CD8-positive, alpha-beta T cell (primary cell): ENCODE measurements at regions of chr11 and their contacts with region 1.

Region 1: DNA sequence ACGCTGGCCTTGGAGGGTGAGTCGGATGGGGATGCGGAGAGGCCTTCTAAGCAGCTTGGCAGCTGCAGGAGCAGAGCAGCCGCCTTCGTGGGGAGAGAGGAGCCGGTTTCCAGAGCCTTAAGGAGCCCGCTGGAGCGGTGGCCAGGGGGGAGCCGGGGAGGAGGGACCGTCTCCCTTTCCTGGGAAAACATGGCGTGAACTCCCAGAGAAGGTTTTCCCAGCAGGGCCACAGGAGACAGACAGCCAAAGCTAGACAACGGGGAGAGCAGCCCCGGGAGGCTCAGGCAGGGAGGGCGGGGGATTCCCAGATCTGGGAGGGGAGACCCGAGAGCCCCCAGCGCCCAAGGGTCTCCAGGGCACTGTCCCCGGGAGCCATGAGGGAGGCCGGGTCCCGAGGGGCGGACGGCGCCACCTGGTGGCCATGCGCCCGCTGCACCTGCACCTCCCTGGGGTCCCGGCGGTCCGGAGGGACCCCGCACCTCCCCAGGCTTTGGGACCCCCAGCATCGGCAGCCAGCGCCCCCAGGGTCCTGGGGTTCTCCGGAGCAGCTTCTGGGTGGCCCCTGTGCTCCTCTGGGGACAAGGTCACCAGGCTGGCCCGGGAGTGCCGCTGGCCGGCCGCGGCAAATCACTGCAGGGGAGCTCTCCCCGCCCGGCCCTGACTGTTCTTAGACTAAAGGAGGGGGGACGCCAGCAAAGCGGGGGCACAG is 2.4 kb upstream of the SYT8 start:
- DNase-seq: peak; percentile 43 to 87 (median 70)
- ATAC-seq: peak; percentile 77
- H3K4me3 ChIP-seq: no peak overlapping the region
- H3K4me3 Mint-ChIP-seq: no peak overlapping the region
- H3K27ac ChIP-seq: no peak overlapping the region
- H3K27ac Mint-ChIP-seq: no peak overlapping the region
- H3K4me1 ChIP-seq: peaks cover 7% of the 10 kb centered on the region
- H3K4me1 Mint-ChIP-seq: no peaks in the 10 kb centered on the region
- H3K27me3 ChIP-seq: peaks cover 0 to 6% of the 10 kb centered on the region in 2 experiments
- H3K27me3 Mint-ChIP-seq: peaks cover 2% of the 10 kb centered on the region
- CTCF ChIP-seq: peak; percentile 95

Region 2: DNA sequence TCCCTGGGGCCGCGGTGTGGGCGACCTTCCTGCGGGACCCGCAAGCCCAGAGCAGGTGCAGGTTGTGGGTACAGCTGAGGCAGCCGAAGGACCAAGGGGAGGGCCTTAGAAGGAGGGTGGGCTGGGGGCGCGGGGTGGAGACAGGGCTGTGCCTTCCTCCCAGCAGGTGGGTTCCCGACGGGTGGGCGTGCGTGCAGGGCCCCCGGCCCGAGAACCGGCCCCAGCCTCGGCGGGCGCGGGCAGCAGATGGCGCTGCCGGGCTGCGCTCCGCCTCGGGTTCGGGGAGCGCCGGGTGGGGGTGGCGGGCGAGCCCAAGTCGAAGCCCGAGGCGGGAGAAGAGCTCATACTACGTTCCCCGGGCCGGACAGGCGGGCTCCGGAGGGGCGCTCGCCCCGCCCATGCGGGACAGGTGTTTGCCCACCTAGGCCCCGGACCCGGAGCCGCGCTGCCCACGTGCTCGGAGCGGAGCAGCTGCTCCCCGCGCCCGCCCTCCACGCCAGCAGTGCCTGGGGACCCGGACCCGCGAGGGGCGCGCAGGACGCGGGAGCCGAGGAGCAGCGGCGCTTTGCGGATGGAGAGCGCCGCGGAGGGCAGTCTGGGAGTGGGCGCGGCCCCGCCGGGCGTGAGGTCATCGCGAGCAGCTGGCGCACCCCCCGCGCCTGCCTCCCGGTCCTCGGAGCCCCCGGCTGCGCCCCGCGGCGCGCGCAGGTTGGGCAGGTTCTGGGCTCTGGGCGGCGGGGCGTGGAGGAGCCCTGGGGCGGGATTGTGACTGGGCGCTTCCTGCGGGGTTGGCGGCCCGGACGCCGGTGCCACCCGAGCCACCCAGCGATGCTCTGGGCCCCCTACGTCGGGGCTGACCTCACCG is 285.6 kb before region 1 on chr11:
- CTCF ChIA-PET with region 1: interaction called, 5 read pairs
- POLR2A ChIA-PET with region 1: no interaction called
- intact Hi-C with region 1: loop called in 1 of 2 experiments (anchors 1 kb)
- DNase-seq: peak in 8 of 9 experiments; percentile 22 to 78 (median 60)
- ATAC-seq: peak; percentile 82
- H3K4me3 ChIP-seq: peak overlapping the region in 1 of 2 experiments; percentile 43
- H3K4me3 Mint-ChIP-seq: no peak overlapping the region
- H3K27ac ChIP-seq: no peak overlapping the region
- H3K27ac Mint-ChIP-seq: no peak overlapping the region
- H3K4me1 ChIP-seq: peaks cover 13% of the 10 kb centered on the region
- H3K4me1 Mint-ChIP-seq: peaks cover 4% of the 10 kb centered on the region
- H3K27me3 ChIP-seq: peaks cover 9 to 18% of the 10 kb centered on the region in 2 experiments
- H3K27me3 Mint-ChIP-seq: peaks cover 25% of the 10 kb centered on the region
- CTCF ChIP-seq: peak; percentile 82

Region 3: DNA sequence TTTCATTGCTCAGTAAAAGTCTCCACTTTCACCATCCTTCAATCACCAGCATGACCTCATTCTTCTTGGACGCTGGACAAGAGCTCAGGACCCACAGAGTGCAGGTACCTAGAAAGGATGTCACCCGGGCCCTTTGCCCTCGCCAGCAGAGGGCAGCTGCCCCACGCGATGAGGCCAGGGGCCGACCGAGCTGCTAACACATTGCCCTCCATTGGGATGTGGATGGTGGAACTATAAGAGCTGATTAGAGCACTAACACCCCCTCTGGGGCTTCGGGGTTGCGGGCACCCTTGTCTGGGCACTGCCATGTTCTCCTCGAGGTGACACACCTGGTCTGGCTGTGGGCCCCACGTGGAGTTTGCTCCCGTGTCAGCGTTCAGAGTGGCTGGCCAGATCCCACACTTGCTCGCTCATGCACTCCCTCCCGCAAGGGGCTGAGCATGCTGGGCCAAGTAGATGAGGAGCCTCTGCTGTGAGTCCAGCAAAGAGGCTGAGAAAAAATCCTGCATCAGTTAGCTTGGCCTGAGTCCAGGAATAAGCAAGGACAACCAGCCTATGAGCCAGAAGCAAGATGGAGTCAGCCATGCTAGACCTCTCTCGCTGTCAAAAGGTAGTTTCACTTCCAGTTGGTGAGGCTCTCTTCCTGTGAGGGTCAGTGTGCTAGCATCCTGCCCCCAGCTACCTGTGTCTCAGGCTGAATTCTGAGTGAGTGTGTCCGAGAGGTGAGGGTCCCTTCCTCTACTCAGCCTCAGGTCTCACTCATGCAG is 125.5 kb before region 1 on chr11:
- CTCF ChIA-PET with region 1: interaction called, 158 read pairs
- POLR2A ChIA-PET with region 1: no interaction called
- intact Hi-C with region 1: no loop called
- DNase-seq: peak in 1 of 9 experiments; percentile 34
- ATAC-seq: no peak
- H3K4me3 ChIP-seq: no peak overlapping the region
- H3K4me3 Mint-ChIP-seq: no peak overlapping the region
- H3K27ac ChIP-seq: no peak overlapping the region
- H3K27ac Mint-ChIP-seq: no peak overlapping the region
- H3K4me1 ChIP-seq: peaks cover under 1% of the 10 kb centered on the region
- H3K4me1 Mint-ChIP-seq: peaks cover 1% of the 10 kb centered on the region
- H3K27me3 ChIP-seq: no peaks in the 10 kb centered on the region
- H3K27me3 Mint-ChIP-seq: no peaks in the 10 kb centered on the region
- CTCF ChIP-seq: no peak

Region 4: DNA sequence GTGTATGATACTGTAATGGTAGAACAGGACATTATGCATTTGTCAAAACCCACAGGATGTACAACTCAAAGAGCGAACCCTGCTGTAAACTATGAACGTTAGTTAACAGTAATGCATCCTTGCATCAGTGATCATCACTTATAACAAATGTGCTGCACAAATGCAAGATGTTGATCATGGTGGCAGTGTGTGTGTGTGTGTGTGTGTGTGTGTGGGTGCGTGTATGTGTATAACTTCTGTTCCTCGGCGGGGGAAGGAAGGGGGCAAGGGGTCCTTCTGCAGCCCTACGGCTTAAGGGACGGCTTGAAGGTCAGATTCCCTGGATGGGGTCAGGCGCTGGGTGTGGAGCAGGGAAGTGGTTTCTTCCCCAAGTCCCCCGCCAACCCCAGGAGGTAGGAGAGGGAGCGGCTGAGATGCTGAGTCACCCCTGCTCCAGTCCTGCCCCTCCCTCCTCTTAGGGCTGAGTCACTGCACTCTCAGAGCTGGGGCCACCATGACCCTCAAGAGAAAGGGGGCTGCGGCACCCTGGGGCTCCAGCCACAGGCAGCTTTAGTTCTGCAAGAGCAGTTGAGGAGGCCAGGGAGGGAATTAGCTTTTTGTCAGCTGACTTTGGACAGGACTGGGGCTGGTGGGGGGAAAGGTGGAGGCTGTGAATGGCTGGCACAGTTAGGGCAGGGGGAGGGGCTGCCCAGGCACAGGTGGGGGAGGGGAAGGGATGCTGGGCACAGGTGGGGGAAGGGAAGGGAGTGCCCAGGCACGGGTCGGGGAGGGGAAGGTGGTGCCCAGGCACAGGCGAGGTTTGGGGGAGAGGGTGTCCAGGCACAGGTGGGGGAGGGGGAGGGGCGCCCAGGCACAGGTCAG is 59.9 kb before region 1 on chr11:
- CTCF ChIA-PET with region 1: interaction called, 17 read pairs
- POLR2A ChIA-PET with region 1: no interaction called
- intact Hi-C with region 1: no loop called
- DNase-seq: peak in 5 of 9 experiments; percentile 45 to 69 (median 61)
- ATAC-seq: peak; percentile 90
- H3K4me3 ChIP-seq: no peak overlapping the region
- H3K4me3 Mint-ChIP-seq: peak overlapping the region; percentile 17
- H3K27ac ChIP-seq: peak overlapping the region in 1 of 2 experiments; percentile 31
- H3K27ac Mint-ChIP-seq: peak overlapping the region; percentile 19
- H3K4me1 ChIP-seq: peaks cover 11% of the 10 kb centered on the region
- H3K4me1 Mint-ChIP-seq: peaks cover 17% of the 10 kb centered on the region
- H3K27me3 ChIP-seq: no peaks in the 10 kb centered on the region
- H3K27me3 Mint-ChIP-seq: no peaks in the 10 kb centered on the region
- CTCF ChIP-seq: no peak

Region 5: DNA sequence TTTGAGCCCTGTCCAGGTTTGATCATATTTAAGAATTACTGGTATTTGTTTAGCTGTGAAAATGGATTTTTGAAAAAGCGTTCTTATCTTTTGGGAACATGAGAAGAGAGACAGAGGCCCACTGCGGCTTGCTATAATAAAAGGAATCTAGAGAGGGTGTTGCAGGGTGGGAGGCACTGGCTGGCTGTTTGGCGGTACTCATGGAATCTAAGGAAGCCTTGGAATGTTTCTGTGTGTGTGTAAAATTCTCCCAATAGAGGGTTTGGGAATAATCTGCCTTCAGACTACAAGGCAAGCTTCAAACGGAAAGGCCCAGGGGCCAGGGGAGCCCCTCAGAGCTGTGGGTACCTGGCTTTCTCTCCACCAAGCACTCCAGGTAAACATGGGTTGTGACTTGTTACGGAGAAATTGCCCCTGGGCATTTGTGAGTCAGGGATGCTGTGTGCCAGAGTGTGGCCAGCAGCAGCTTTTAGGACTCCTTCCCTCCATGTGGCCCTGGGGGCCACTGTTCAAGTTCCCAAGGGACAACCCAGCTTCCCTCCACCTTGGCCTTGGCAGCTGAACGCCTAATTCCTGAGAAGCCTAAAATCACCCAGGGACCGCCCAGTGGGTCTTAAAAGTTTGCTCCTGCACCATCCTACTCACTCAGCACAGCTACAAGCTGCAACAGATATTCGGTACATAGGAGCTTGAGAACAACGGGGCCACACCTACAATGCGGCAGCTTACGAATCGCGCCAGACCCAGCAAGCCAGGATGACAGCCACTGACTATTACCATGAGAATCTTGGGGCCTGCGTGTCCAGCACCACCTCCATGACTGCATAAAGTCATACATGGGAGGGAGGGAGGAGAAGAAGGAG is 11.7 kb before region 1 on chr11:
- CTCF ChIA-PET with region 1: interaction called, 34 read pairs
- POLR2A ChIA-PET with region 1: no interaction called
- intact Hi-C with region 1: no loop called
- DNase-seq: no peak
- ATAC-seq: no peak
- H3K4me3 ChIP-seq: no peak overlapping the region
- H3K4me3 Mint-ChIP-seq: no peak overlapping the region
- H3K27ac ChIP-seq: no peak overlapping the region
- H3K27ac Mint-ChIP-seq: no peak overlapping the region
- H3K4me1 ChIP-seq: no peaks in the 10 kb centered on the region
- H3K4me1 Mint-ChIP-seq: no peaks in the 10 kb centered on the region
- H3K27me3 ChIP-seq: no peaks in the 10 kb centered on the region
- H3K27me3 Mint-ChIP-seq: peaks cover 2% of the 10 kb centered on the region
- CTCF ChIP-seq: no peak

Region 6: DNA sequence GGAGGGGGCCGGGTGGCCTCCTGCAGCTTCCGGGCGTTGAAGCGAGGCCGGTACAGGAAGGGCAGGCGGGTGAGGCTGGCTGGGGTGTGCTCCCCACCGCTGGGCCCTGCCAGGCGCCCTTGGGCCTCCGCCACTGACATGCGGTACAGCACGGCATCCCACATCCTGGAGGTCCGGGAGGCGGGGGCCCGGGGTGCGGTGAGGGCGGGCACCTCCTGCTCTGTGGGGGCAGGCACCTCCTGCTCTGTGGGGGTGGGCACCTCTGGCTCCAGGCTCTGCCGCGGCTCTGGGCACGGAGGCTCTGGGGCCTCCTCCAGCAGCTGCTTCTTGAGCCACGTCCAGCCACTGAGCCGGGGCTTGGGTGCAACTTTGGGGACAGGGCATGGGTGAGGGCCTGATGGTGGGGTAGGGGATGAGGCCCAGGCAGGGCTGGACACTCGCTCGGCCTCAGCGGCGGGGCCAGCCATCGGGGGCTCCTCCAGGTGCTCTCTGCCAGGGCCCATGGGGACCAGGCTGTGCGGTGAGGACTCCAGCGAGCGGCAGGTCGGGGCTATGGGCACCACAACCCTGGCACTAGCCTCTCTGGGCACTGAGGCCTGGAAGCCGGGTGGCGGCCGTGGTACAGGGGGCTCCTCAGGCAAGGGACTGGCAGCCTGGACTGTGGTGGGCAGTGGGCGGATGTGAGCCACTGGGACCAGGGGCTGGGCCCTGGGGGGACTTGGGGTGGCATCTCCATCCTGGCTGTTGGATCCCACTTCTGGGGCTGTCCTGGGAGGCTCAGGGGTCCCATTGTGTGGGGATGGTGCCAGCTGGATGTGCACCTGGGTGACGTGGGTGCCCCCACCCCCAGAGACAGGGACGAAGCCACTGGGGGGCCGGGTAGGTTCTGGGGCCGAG is 57.1 kb after region 1 on chr11:
- CTCF ChIA-PET with region 1: interaction called, 11 read pairs
- POLR2A ChIA-PET with region 1: no interaction called
- intact Hi-C with region 1: no loop called
- DNase-seq: peak; percentile 63 to 94 (median 83)
- ATAC-seq: peak; percentile 91
- H3K4me3 ChIP-seq: peak overlapping the region; percentile 45 to 64
- H3K4me3 Mint-ChIP-seq: peak overlapping the region; percentile 78
- H3K27ac ChIP-seq: peak overlapping the region; percentile 38 to 70
- H3K27ac Mint-ChIP-seq: peak overlapping the region; percentile 83
- H3K4me1 ChIP-seq: peaks cover 51% of the 10 kb centered on the region
- H3K4me1 Mint-ChIP-seq: peaks cover 52% of the 10 kb centered on the region
- H3K27me3 ChIP-seq: no peaks in the 10 kb centered on the region
- H3K27me3 Mint-ChIP-seq: no peaks in the 10 kb centered on the region
- CTCF ChIP-seq: no peak

Region 7: DNA sequence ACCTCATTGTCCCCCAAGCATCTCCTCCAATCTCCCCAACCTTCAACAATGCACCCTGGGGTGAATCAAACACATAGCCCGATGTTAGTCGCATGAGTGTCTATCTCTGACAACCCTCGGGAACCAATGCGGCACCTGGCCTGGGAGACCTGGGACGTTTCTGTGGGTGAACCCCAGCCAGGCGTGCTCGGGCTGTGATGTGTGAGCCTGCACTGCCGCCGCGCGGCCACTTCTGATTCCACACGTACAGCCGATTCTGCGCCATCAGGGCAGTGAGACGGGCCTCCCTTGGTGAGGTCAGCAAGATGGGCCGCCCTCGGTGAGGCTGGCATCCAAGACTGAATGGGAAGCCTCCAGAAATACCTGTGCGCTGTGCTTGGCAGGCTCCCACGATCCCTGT is 170.4 kb after region 1 on chr11:
- CTCF ChIA-PET with region 1: interaction called, 111 read pairs
- POLR2A ChIA-PET with region 1: interaction called, 3 read pairs
- intact Hi-C with region 1: no loop called
- DNase-seq: no peak
- ATAC-seq: peak; percentile 50
- H3K4me3 ChIP-seq: no peak overlapping the region
- H3K4me3 Mint-ChIP-seq: no peak overlapping the region
- H3K27ac ChIP-seq: no peak overlapping the region
- H3K27ac Mint-ChIP-seq: no peak overlapping the region
- H3K4me1 ChIP-seq: no peaks in the 10 kb centered on the region
- H3K4me1 Mint-ChIP-seq: no peaks in the 10 kb centered on the region
- H3K27me3 ChIP-seq: no peaks in the 10 kb centered on the region
- H3K27me3 Mint-ChIP-seq: no peaks in the 10 kb centered on the region
- CTCF ChIP-seq: no peak

Region 8: GRCh38 chr11:2963112-2963817 is 1130.9 kb after region 1 on chr11:
- CTCF ChIA-PET with region 1: no interaction called
- POLR2A ChIA-PET with region 1: no interaction called
- intact Hi-C with region 1: no loop called
- DNase-seq: no peak
- ATAC-seq: no peak
- H3K4me3 ChIP-seq: no peak overlapping the region
- H3K4me3 Mint-ChIP-seq: no peak overlapping the region
- H3K27ac ChIP-seq: no peak overlapping the region
- H3K27ac Mint-ChIP-seq: no peak overlapping the region
- H3K4me1 ChIP-seq: no peaks in the 10 kb centered on the region
- H3K4me1 Mint-ChIP-seq: peaks cover 39% of the 10 kb centered on the region
- H3K27me3 ChIP-seq: no peaks in the 10 kb centered on the region
- H3K27me3 Mint-ChIP-seq: no peaks in the 10 kb centered on the region
- CTCF ChIP-seq: no peak